ENCODE measurements at regions of chr21 and their contacts with region 1.

Region 1: GRCh38 chr21:28943631-28944030 is 49.0 kb downstream of the LTN1 start:
- DNase-seq: no peak
- ATAC-seq: no peak
- H3K4me3 ChIP-seq: no peak overlapping the region
- H3K27ac ChIP-seq: no peak overlapping the region
- H3K4me1 ChIP-seq: no peaks in the 10 kb centered on the region
- H3K27me3 ChIP-seq: no peaks in the 10 kb centered on the region
- CTCF ChIP-seq: no peak
- EP300 ChIP-seq: no peak
- POLR2A ChIP-seq: no peak
- RAD21 ChIP-seq: no peak

Region 2: GRCh38 chr21:28516991-28517592 is 426.5 kb before region 1 on chr21:
- CTCF ChIA-PET with region 1: interaction called, 3 read pairs
- POLR2A ChIA-PET with region 1: no interaction called
- RAD21 ChIA-PET with region 1: no interaction called
- SMC1A ChIA-PET with region 1: no interaction called
- in situ Hi-C with region 1: no loop called
- intact Hi-C with region 1: loop called (anchors 5 kb)
- DNase-seq: peak; percentile 8
- ATAC-seq: peak; percentile 77
- H3K4me3 ChIP-seq: no peak overlapping the region
- H3K27ac ChIP-seq: no peak overlapping the region
- H3K4me1 ChIP-seq: no peaks in the 10 kb centered on the region
- H3K27me3 ChIP-seq: no peaks in the 10 kb centered on the region
- CTCF ChIP-seq: peak; percentile 57 to 65 (median 61); a peak in 5 of 6 replicates
- EP300 ChIP-seq: no peak
- POLR2A ChIP-seq: no peak
- RAD21 ChIP-seq: peak; percentile 24; the same call in 1 of the 2 replicates

Measured in GM12878 (cell line).